Aorta (tissue), 5 donors: ENCODE measurements at regions of chr4 and their contacts with region 1.

Region 1: GRCh38 chr4:126346654-126347053 is 1031.9 kb downstream of the FAT4 start:
- DNase-seq: no peak
- ATAC-seq: no peak
- H3K4me3 ChIP-seq: no peak overlapping the region
- H3K27ac ChIP-seq: no peak overlapping the region
- H3K4me1 ChIP-seq: no peaks in the 10 kb centered on the region
- H3K27me3 ChIP-seq: no peaks in the 10 kb centered on the region

Region 2: DNA sequence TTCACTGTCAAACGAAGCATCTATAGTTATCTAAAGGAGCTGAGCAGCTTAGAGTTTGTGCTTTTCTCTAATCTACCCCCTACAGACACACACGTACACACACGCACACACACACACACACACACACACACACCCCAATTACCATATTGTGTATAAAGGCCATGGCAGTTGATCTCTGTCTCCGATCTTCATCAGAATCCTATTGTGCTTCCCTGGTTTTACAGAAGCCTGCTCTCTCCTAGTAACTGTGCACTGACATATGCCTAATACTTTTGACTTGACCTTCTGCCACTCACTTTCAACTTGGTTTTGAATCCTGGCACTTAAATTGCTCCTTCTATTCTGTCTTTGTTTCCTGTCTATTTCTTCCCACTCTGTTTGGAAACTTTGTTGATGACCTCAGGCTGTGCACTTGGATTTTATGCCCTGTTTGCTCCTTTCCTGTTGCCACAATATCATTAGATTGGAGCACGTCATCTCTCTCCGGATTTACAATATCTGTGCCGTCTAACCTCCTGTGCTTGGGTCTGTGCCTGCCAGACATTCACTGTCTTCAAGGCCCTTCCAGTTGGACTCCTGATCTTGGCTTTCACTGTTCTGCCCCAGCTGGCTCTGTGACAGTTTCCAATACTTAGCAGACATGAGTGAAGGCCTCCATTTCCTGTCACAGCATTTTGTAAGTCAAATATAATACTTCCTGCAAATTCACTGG is 103.8 kb before region 1 on chr4:
- intact Hi-C with region 1: no loop called
- DNase-seq: peak in 1 of 2 donors; percentile 51
- ATAC-seq: no peak
- H3K4me3 ChIP-seq: no peak overlapping the region
- H3K27ac ChIP-seq: peak overlapping the region in 1 of 2 donors; percentile 59
- H3K4me1 ChIP-seq: no peaks in the 10 kb centered on the region
- H3K27me3 ChIP-seq: no peaks in the 10 kb centered on the region

Region 3: GRCh38 chr4:126306152-126306869 is 40.3 kb before region 1 on chr4:
- intact Hi-C with region 1: loop called in 1 of 2 experiments (anchors 5 kb)
- DNase-seq: peak in 1 of 2 donors; percentile 48
- ATAC-seq: peak; percentile 93
- H3K4me3 ChIP-seq: no peak overlapping the region
- H3K27ac ChIP-seq: no peak overlapping the region
- H3K4me1 ChIP-seq: peaks cover 0 to 3% of the 10 kb centered on the region in 2 donors
- H3K27me3 ChIP-seq: no peaks in the 10 kb centered on the region

Region 4: GRCh38 chr4:126560794-126561193 is 214.1 kb after region 1 on chr4:
- intact Hi-C with region 1: no loop called
- DNase-seq: no peak
- ATAC-seq: no peak
- H3K4me3 ChIP-seq: no peak overlapping the region
- H3K27ac ChIP-seq: no peak overlapping the region
- H3K4me1 ChIP-seq: no peaks in the 10 kb centered on the region
- H3K27me3 ChIP-seq: no peaks in the 10 kb centered on the region